Naive thymus-derived CD4-positive, alpha-beta T cell (primary cell): ENCODE measurements at regions of chr5 and their contacts with region 1.

Region 1: GRCh38 chr5:52743970-52744369 is 43.7 kb upstream of the ITGA1 start:
- DNase-seq: peak in 8 of 9 donors; percentile 24 to 68 (median 54)
- ATAC-seq: peak; percentile 91
- H3K4me3 ChIP-seq: no peak overlapping the region
- H3K4me3 Mint-ChIP-seq: peak overlapping the region in 9 of 10 donors; percentile 42 to 70 (median 61)
- H3K27ac ChIP-seq: peak overlapping the region; percentile 49
- H3K27ac Mint-ChIP-seq: peak overlapping the region; percentile 80 to 93 (median 90)
- H3K4me1 ChIP-seq: peaks cover 35 to 36% of the 10 kb centered on the region in 2 donors
- H3K4me1 Mint-ChIP-seq: peaks cover 35 to 69% (median 61%) of the 10 kb centered on the region in 7 donors
- H3K27me3 ChIP-seq: no peaks in the 10 kb centered on the region
- H3K27me3 Mint-ChIP-seq: peaks cover 0 to 5% (median 0%) of the 10 kb centered on the region in 5 donors

Region 2: DNA sequence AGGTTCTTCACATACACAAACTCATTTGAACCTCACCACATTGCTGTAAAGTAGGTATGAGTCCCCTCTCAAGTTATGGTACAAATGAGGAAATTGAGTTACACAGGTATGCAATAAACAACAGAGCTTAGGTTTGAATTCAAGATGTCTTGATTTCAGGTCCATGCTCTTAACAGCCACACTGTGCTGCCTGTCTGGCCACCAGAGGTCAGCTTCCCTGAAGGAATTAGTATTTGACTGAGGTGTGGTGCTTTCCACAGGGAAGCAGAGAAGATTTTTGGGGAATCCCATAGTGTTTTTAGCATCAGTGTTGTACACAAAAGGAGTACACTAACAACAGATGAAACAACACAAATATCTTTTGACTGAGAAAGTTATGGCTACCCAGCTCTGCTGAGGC is 50.7 kb before region 1 on chr5:
- CTCF ChIA-PET with region 1: no interaction called
- POLR2A ChIA-PET with region 1: no interaction called
- intact Hi-C with region 1: loop called (anchors 2 to 5 kb)
- DNase-seq: peak in 7 of 9 donors; percentile 10 to 27 (median 25)
- ATAC-seq: peak; percentile 48
- H3K4me3 ChIP-seq: no peak overlapping the region
- H3K4me3 Mint-ChIP-seq: no peak overlapping the region
- H3K27ac ChIP-seq: no peak overlapping the region
- H3K27ac Mint-ChIP-seq: peak overlapping the region in 2 of 9 donors; percentile 1 to 18
- H3K4me1 ChIP-seq: no peaks in the 10 kb centered on the region
- H3K4me1 Mint-ChIP-seq: peaks cover 0 to 17% (median 7%) of the 10 kb centered on the region in 7 donors
- H3K27me3 ChIP-seq: no peaks in the 10 kb centered on the region
- H3K27me3 Mint-ChIP-seq: peaks cover 0 to 26% (median 0%) of the 10 kb centered on the region in 5 donors

Region 3: DNA sequence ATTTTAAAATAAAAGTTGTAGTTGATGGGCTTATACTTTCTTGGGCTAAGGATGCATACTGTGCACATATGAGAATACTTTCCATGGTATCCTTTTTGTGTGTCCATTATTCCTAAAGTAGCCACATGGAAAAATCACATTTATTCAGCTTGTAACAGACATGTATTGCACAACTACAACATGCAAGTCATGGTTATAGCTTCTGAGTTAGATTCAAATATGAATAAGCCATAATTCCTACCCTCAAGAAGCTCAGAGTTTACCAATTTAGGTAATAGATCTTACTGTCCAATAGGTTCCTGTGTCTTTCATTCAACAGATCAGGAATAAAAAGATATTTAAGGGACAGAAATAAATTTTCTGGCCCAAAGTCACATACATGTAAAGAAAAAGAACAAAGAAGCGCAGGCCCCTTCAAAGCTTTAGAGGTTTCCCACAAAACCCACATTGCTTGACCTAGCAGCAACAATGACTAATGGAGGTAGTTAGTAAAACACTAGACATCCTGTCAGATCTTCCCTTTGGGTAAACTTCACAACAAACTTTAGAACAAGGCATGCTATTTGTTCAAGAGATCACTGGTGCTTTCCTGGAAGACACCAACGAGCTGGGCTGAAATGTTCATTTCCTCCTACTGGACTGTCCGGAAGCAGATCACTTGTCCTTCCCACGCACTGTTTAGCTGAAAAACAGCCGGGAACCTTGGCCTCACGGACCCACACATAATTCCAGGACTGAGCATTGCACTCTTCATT is 34.6 kb before region 1 on chr5:
- CTCF ChIA-PET with region 1: no interaction called
- POLR2A ChIA-PET with region 1: no interaction called
- intact Hi-C with region 1: loop called in 1 of 2 experiments (anchors 5 kb)
- DNase-seq: peak in 1 of 9 donors; percentile 36
- ATAC-seq: no peak
- H3K4me3 ChIP-seq: no peak overlapping the region
- H3K4me3 Mint-ChIP-seq: peak overlapping the region in 1 of 10 donors; percentile 50
- H3K27ac ChIP-seq: no peak overlapping the region
- H3K27ac Mint-ChIP-seq: peak overlapping the region in 1 of 9 donors; percentile 61
- H3K4me1 ChIP-seq: peaks cover 20 to 39% of the 10 kb centered on the region in 2 donors
- H3K4me1 Mint-ChIP-seq: peaks cover 24 to 83% (median 63%) of the 10 kb centered on the region in 7 donors
- H3K27me3 ChIP-seq: no peaks in the 10 kb centered on the region
- H3K27me3 Mint-ChIP-seq: peaks cover 0 to 5% (median 0%) of the 10 kb centered on the region in 5 donors

Region 4: GRCh38 chr5:52760695-52761366 is 16.9 kb after region 1 on chr5:
- CTCF ChIA-PET with region 1: interaction called, 5 read pairs
- POLR2A ChIA-PET with region 1: interaction called, 4 read pairs
- intact Hi-C with region 1: loop called in 1 of 2 experiments (anchors 2 kb)
- DNase-seq: peak in 1 of 9 donors; percentile 24
- ATAC-seq: no peak
- H3K4me3 ChIP-seq: no peak overlapping the region
- H3K4me3 Mint-ChIP-seq: no peak overlapping the region
- H3K27ac ChIP-seq: no peak overlapping the region
- H3K27ac Mint-ChIP-seq: no peak overlapping the region
- H3K4me1 ChIP-seq: peaks cover 0 to 5% of the 10 kb centered on the region in 2 donors
- H3K4me1 Mint-ChIP-seq: peaks cover 5 to 12% (median 6%) of the 10 kb centered on the region in 7 donors
- H3K27me3 ChIP-seq: no peaks in the 10 kb centered on the region
- H3K27me3 Mint-ChIP-seq: no peaks in the 10 kb centered on the region

Region 5: GRCh38 chr5:52771343-52772039 is 27.5 kb after region 1 on chr5:
- CTCF ChIA-PET with region 1: interaction called, 4 read pairs
- POLR2A ChIA-PET with region 1: no interaction called
- intact Hi-C with region 1: loop called (anchors 1 to 2 kb)
- DNase-seq: peak in 4 of 9 donors; percentile 21 to 43 (median 26)
- ATAC-seq: peak; percentile 71
- H3K4me3 ChIP-seq: peak overlapping the region; percentile 3
- H3K4me3 Mint-ChIP-seq: peak overlapping the region in 9 of 10 donors; percentile 42 to 78 (median 67)
- H3K27ac ChIP-seq: peak overlapping the region; percentile 31
- H3K27ac Mint-ChIP-seq: peak overlapping the region; percentile 67 to 94 (median 85)
- H3K4me1 ChIP-seq: peaks cover 34 to 45% of the 10 kb centered on the region in 2 donors
- H3K4me1 Mint-ChIP-seq: peaks cover 35 to 76% (median 49%) of the 10 kb centered on the region in 7 donors
- H3K27me3 ChIP-seq: no peaks in the 10 kb centered on the region
- H3K27me3 Mint-ChIP-seq: peaks cover 0 to 7% (median 0%) of the 10 kb centered on the region in 5 donors

Region 6: DNA sequence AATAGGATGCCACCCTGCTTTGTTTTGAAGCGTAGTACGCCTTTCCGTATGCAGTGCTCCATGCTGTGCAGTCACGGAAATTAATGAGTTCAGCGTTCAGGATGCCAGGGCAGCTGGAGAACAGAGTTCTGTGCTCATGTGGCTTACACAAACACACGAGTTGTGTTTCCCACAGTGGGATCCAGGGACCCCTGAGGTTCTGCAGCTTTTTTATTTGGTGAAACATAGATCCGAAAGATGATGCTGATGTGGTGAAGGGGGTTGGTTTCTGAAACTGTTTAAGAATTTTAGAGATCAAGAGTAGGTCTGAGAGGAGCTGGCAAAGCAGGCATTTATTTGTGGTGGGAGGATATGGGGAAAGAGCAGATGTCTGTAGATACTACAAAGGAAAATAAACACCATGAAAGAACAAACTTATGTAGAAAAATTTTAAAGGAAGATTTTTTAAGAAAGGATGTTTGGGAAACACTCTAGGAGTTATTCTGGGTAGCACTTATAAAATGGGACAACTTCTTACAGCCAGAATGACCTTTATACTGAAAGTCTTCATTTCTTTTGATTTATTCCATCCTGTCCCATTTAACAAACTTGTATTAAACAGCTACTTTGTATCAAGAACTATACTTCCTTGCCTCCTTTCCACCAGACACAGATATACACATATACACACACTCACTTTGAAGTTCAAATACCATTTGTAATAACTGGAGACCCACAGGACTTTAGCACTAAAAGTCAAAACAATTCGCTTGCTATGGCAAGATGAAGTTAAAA is 96.5 kb after region 1 on chr5:
- CTCF ChIA-PET with region 1: no interaction called
- POLR2A ChIA-PET with region 1: no interaction called
- intact Hi-C with region 1: no loop called
- DNase-seq: no peak
- ATAC-seq: no peak
- H3K4me3 ChIP-seq: no peak overlapping the region
- H3K4me3 Mint-ChIP-seq: no peak overlapping the region
- H3K27ac ChIP-seq: no peak overlapping the region
- H3K27ac Mint-ChIP-seq: peak overlapping the region in 1 of 9 donors; percentile 71
- H3K4me1 ChIP-seq: no peaks in the 10 kb centered on the region
- H3K4me1 Mint-ChIP-seq: peaks cover 0 to 15% (median 8%) of the 10 kb centered on the region in 7 donors
- H3K27me3 ChIP-seq: no peaks in the 10 kb centered on the region
- H3K27me3 Mint-ChIP-seq: peaks cover 0 to 2% (median 0%) of the 10 kb centered on the region in 5 donors